A673 (cell line): ENCODE measurements at regions of chr6 and their contacts with region 1.

Region 1: GRCh38 chr6:109526905-109527628 is 44.0 kb upstream of the ZBTB24 start:
- DNase-seq: peak; percentile 83
- H3K4me3 ChIP-seq: no peak overlapping the region
- H3K27ac ChIP-seq: no peak overlapping the region
- H3K4me1 ChIP-seq: no peaks in the 10 kb centered on the region
- H3K27me3 ChIP-seq: no peaks in the 10 kb centered on the region
- CTCF ChIP-seq: peak; percentile 80

Region 2: DNA sequence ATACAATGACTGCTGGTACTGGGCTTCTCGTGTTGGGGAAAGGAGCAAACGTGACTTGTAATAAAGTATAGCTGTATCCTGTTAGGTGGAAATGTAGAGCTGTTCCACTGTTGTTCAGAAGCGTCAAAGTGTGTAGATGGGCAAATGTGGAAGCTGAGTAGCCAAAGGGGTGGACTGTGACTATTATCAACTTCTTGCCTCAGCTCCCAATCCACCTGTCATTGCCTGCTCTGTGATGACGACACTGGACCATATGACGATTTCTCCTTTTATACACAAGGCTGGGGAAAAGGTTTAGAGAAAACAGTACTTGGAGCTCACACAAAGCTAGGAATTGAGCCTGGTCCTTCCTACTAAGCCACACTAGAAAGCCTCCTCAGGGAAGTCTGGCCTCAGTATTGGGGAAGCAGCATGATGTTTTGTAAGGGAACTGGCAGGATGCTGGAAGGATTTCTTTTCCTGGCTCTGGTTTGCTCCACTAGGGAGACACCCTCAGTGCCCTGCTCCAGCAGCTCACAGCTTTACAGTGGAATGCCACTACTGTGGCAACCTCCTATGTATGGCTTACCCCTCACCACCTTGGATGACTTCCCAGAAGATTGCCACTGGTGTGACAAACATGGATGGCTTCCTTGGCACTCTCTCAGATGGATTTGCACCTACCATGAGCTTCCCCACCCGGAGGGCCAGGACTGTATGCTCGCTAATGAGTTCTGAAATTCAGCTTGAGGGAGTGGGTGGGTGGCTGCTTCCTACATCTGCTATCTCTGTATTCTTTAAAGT is 164.8 kb before region 1 on chr6:
- CTCF ChIA-PET with region 1: no interaction called
- POLR2A ChIA-PET with region 1: no interaction called
- intact Hi-C with region 1: no loop called
- DNase-seq: no peak
- H3K4me3 ChIP-seq: no peak overlapping the region
- H3K27ac ChIP-seq: no peak overlapping the region
- H3K4me1 ChIP-seq: no peaks in the 10 kb centered on the region
- H3K27me3 ChIP-seq: no peaks in the 10 kb centered on the region
- CTCF ChIP-seq: no peak

Region 3: DNA sequence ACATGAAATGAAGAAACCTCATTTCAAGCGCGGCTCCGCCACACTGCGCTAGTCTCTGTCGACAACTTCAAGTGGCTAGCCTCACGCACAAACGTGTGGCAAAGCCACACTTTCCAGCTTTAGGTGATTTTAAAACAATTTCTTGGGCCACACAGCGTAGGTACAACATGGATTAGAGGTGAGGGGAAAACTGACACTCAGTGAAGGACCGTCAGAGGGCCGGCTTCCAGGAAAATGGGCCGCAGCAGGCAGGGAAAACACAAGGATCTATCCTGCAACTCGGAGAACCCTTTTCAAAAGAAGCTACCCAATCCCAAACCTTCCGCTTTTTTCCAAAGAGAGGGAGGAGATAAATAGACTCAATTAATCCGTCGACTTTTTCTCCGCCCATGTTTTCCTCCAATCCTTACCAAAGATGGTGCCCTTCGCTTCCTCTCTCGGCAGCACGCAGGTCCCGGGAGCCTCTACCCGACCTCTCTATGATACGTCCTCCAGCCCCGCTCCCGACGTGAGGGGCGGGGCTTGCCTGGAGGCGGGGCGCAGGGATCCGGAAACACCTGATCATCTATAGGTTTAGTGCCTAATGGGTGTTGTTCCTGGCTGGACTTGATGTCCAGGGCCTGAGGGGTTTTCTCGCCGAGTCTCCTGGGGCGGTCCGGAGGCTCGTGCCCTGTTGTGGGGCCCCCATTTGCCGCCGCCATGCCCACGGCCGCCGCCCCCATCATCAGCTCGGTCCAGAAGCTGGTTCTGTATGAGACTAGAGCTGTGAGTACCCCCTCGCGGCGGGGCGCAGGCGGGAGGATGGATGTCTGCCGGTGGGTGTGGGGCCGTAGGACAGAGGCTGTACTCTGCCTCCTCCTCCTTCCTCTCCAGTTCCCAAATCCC is 163.9 kb after region 1 on chr6 and contains the starts of genes AK9 and FIG4:
- CTCF ChIA-PET with region 1: interaction called, 6 read pairs
- POLR2A ChIA-PET with region 1: no interaction called
- intact Hi-C with region 1: loop called (anchors 2 kb)
- DNase-seq: peak; percentile 96
- H3K4me3 ChIP-seq: peak within 1 kb of the TSS; percentile 77
- H3K27ac ChIP-seq: peak within 1 kb of the TSS; percentile 82
- H3K4me1 ChIP-seq: peaks cover 12% of the 10 kb centered on the region
- H3K27me3 ChIP-seq: no peaks in the 10 kb centered on the region
- CTCF ChIP-seq: 0 out of 2 replicates have a peak, but pooled peaks have one; percentile 23
- total RNA-seq, gene AK9: 2.6 TPM in 2 replicates
- total RNA-seq, gene FIG4: 10.9 and 16.5 TPM in 2 replicates

Region 4: GRCh38 chr6:109705258-109705657 is 178.2 kb after region 1 on chr6:
- CTCF ChIA-PET with region 1: no interaction called
- POLR2A ChIA-PET with region 1: no interaction called
- intact Hi-C with region 1: loop called (anchors 5 kb)
- DNase-seq: peak; percentile 92
- H3K4me3 ChIP-seq: no peak overlapping the region
- H3K27ac ChIP-seq: no peak overlapping the region
- H3K4me1 ChIP-seq: peaks cover 4% of the 10 kb centered on the region
- H3K27me3 ChIP-seq: no peaks in the 10 kb centered on the region
- CTCF ChIP-seq: peak; percentile 99